ENCODE measurements at regions of chr13 and their contacts with region 1.

Region 1: DNA sequence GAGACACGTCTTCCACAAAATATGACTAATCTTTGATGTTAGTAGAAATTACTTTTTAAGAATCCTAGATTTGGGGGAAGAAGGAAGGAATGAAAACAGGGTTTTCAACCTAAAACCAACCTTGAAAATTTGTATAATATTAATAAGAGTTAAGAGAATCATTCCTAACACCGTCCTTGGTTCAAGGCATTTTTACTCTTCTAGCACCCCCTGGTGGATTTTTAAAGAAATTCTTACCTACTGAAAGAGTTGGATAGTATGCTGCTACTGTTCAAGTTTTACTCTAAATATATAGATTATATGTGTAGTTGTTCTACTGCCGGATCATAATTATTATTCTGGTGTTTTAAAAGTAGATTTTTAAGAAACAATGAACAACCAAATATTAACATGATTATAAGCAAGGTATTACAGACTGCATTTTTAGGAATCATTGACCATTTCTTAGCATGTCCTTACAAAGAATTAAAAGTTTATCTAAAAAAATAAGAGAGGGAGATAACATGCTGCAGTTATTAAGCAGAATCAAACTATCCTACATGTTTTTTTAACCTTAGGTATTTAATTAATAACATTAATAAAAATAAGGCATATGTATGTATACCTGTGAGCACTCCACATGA is 7.4 kb upstream of the SLITRK6 start:
- DNase-seq: peak; percentile 65
- H3K4me3 ChIP-seq: no peak overlapping the region
- H3K27ac ChIP-seq: no peak overlapping the region
- H3K4me1 ChIP-seq: no peaks in the 10 kb centered on the region
- CTCF ChIP-seq: peak; percentile 99

Region 2: GRCh38 chr13:84896128-84896527 is 910.5 kb before region 1 on chr13:
- CTCF ChIA-PET with region 1: no interaction called
- POLR2A ChIA-PET with region 1: interaction called, 3 read pairs
- intact Hi-C with region 1: loop called (anchors 1 kb)
- DNase-seq: peak; percentile 75
- H3K4me3 ChIP-seq: no peak overlapping the region
- H3K27ac ChIP-seq: no peak overlapping the region
- H3K4me1 ChIP-seq: no peaks in the 10 kb centered on the region
- CTCF ChIP-seq: peak; percentile 97

Region 3: GRCh38 chr13:84917252-84917878 is 889.3 kb before region 1 on chr13:
- CTCF ChIA-PET with region 1: no interaction called
- POLR2A ChIA-PET with region 1: interaction called, 3 read pairs
- intact Hi-C with region 1: loop called (anchors 2 kb)
- DNase-seq: peak; percentile 60
- H3K4me3 ChIP-seq: no peak overlapping the region
- H3K27ac ChIP-seq: no peak overlapping the region
- H3K4me1 ChIP-seq: no peaks in the 10 kb centered on the region
- CTCF ChIP-seq: peak; percentile 91